GM18951 (cell line): ENCODE measurements at regions of chr10 and their contacts with region 1.

Region 1: GRCh38 chr10:103859161-103860086 is 4.0 kb upstream of the SH3PXD2A start:
- POLR2A ChIP-seq: no peak

Region 2: DNA sequence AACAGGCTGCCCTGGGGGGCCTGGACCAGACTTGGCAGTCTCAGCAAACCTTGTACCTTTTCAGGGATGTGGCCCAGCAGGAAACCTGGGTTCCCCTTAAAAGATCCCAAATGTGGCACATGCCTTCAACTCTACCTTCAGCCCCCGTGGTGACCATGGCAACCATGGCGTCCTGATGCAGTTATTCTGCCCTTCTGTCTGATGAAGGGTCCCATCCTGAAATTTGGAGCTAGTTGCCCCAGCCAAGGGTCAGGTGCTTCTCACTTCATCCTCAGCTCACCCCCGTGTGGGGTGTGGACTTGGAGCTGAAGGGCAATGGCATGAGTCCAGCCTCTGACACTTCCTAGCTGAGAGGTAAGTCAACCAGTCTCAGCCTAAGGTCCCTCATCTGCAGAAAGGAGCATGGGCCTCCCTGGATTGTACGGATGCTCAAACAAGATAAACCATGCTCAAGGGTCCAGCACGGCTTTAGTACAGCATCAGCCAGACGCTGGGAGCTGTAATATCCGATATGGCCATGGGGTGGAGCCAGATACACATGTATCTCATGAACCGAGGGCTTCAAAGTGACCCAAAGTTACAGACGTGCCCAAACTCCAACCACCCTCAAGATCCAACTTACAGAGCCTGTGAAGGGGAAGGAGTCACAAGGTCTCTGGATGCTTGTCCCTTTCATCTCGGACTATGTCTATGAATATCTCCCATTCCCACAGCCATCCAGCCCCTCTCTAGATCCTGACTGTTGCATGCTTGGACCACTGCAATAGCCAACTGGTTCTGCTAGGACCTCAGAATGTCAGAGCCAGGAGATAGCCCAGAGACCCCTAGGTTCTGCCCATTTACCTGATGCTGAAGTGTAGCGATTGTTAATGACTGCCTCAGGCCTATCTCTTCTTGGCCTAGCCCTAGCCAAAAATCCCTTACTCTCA is 146.6 kb before region 1 on chr10:
- in situ Hi-C with region 1: loop called (anchors 5 kb)
- POLR2A ChIP-seq: no peak

Region 3: DNA sequence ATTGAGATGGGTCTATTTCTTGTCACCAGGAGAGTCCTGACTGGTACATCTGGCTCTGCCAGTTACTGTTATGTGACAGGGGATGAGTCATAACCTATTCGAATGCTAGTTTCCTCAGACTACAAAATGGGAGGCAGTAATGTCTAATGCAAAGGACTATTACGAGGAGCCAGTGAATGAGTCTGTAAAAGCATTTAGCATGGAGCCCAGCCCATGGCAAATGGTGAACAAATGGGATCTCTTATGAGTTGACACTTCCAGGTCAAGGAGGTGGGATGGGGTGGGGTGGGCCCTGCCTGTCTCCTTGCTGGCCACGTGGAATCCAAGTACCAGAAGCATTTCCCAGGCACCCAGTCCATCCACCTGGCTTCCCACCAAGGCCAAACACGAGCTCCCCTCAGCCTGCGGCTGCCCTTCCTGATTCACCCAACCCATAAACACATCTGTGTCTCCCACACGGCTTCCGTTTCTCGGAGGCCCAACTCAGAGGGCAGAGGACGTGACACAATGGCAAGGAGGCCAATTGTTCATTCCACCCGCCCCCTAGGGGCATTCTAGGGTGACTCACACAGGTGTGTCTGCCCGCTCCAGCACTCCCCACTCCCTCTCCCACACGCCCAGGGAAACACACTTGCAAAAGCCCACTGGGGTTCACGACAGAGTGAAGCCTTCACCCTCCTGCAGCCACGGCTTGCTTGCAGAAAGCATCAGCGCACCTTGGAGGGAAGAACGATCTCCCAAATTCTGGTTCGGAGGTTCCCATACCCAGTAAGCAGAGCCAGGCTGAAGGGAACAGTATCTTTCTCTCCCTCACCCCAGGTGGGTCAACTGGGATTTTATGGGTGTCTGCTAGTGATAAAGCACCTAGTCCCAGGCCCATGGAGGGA is 113.8 kb before region 1 on chr10:
- in situ Hi-C with region 1: no loop called
- POLR2A ChIP-seq: no peak

Region 4: GRCh38 chr10:103895411-103896186 is 36.2 kb after region 1 on chr10:
- in situ Hi-C with region 1: no loop called
- POLR2A ChIP-seq: no peak